Left ventricle myocardium inferior (tissue), 1 donor: ENCODE measurements at regions of chr16 and their contacts with region 1.

Region 1: GRCh38 chr16:8660841-8661301 is 13.5 kb upstream of the ABAT start:
- DNase-seq: peak; percentile 56
- H3K4me3 ChIP-seq: no peak overlapping the region
- H3K27ac ChIP-seq: no peak overlapping the region
- H3K4me1 ChIP-seq: peaks cover 4% of the 10 kb centered on the region
- H3K27me3 ChIP-seq: no peaks in the 10 kb centered on the region
- CTCF ChIP-seq: peak; percentile 83

Region 2: GRCh38 chr16:8430401-8430800 is 230.5 kb before region 1 on chr16:
- intact Hi-C with region 1: no loop called
- DNase-seq: no peak
- H3K4me3 ChIP-seq: no peak overlapping the region
- H3K27ac ChIP-seq: no peak overlapping the region
- H3K4me1 ChIP-seq: no peaks in the 10 kb centered on the region
- H3K27me3 ChIP-seq: peaks cover under 1% of the 10 kb centered on the region
- CTCF ChIP-seq: no peak

Region 3: GRCh38 chr16:8797364-8798173 is 136.7 kb after region 1 on chr16 and contains the starts of genes PMM2 and TMEM186:
- intact Hi-C with region 1: loop called (anchors 10 kb)
- DNase-seq: peak; percentile 96
- H3K4me3 ChIP-seq: peak within 1 kb of the TSS; percentile 90
- H3K27ac ChIP-seq: peak within 1 kb of the TSS; percentile 83
- H3K4me1 ChIP-seq: peaks cover 53% of the 10 kb centered on the region
- H3K27me3 ChIP-seq: no peaks in the 10 kb centered on the region
- CTCF ChIP-seq: no peak
- total RNA-seq, gene PMM2: 13.7 TPM
- total RNA-seq, gene TMEM186: 16.4 TPM